ENCODE measurements at regions of chr15 and their contacts with region 1.

Region 1: DNA sequence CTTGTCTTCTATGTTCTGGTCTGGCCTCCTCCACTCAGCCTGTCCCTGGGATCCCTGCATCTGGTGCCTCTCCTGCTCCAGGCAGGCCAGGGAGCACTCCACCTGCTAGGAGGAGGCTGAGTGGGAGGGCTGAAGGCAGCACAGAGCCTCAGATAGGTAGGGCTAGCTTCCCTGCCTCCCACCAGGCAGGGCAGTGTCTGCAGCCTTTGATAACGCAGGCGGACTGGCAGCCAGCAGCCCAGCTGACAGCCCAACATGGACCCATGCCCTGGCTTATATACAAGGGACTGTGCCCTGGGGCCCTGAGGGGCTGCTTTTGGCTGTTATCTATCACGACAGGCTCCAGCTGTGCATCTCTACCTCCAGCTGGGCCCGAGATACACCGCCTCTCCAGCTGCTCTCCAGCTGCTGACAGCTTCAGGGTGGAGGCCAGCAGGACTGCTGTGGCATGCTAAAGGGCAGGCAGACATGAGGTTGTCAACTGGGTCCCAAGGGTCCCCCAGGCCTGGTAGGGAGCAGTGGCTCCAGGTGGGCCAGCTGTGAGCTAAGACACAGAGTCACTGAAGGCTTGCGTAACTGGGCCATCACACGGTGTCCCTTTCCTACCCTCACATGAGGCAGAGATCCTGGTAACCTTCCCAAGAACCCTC is 5.2 kb upstream of the CLK3 start:
- DNase-seq: no peak
- ATAC-seq: no peak
- H3K4me3 ChIP-seq: no peak overlapping the region
- H3K27ac ChIP-seq: no peak overlapping the region
- H3K4me1 ChIP-seq: no peaks in the 10 kb centered on the region
- H3K27me3 ChIP-seq: no peaks in the 10 kb centered on the region
- CTCF ChIP-seq: no peak

Region 2: GRCh38 chr15:74752491-74753020 is 142.1 kb after region 1 on chr15:
- CTCF ChIA-PET with region 1: no interaction called
- POLR2A ChIA-PET with region 1: interaction called, 15 read pairs
- in situ Hi-C with region 1: no loop called
- intact Hi-C with region 1: no loop called
- DNase-seq: no peak
- ATAC-seq: no peak; the same call in 1 of the 2 replicates
- H3K4me3 ChIP-seq: no peak overlapping the region
- H3K27ac ChIP-seq: no peak overlapping the region
- H3K4me1 ChIP-seq: no peaks in the 10 kb centered on the region
- H3K27me3 ChIP-seq: no peaks in the 10 kb centered on the region
- CTCF ChIP-seq: no peak